Common myeloid progenitor, CD34-positive (primary cell): ENCODE measurements at regions of chr9 and their contacts with region 1.

Region 1: GRCh38 chr9:2857564-2858198 is 13.8 kb upstream of the PUM3 start:
- DNase-seq: peak; percentile 78 to 91 (median 86)
- H3K4me3 ChIP-seq: no peak overlapping the region
- H3K27ac ChIP-seq: no peak overlapping the region
- H3K4me1 ChIP-seq: no peaks in the 10 kb centered on the region
- H3K27me3 ChIP-seq: peaks cover 0 to 11% (median 0%) of the 10 kb centered on the region in 5 experiments

Region 2: DNA sequence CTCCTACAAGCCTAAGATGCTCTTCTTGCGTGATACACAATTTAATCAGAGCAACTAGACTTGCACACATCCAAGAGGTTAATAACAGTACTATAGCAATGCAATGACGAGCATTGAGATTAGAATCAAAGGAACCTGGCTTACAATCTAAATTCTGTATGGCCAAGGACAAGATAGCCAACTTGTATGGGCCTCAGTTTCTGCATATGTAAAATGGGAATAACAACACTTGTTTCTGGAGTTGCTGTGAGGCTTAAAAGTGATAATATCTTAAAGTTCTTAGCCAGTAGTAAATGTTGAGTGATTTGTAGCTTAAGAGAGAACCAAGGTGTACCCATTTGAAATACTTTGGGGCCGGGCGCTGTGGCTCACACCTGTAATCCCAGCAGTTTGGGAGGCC is 11.6 kb before region 1 on chr9:
- CTCF ChIA-PET with region 1: interaction called, 20 read pairs
- POLR2A ChIA-PET with region 1: no interaction called
- DNase-seq: no peak
- H3K4me3 ChIP-seq: no peak overlapping the region
- H3K27ac ChIP-seq: no peak overlapping the region
- H3K4me1 ChIP-seq: peaks cover 15 to 34% (median 23%) of the 10 kb centered on the region in 4 experiments
- H3K27me3 ChIP-seq: no peaks in the 10 kb centered on the region

Region 3: GRCh38 chr9:2872257-2872935 is 14.7 kb after region 1 on chr9:
- CTCF ChIA-PET with region 1: interaction called, 19 read pairs
- POLR2A ChIA-PET with region 1: no interaction called
- DNase-seq: peak; percentile 54 to 78 (median 75)
- H3K4me3 ChIP-seq: no peak overlapping the region
- H3K27ac ChIP-seq: no peak overlapping the region
- H3K4me1 ChIP-seq: no peaks in the 10 kb centered on the region
- H3K27me3 ChIP-seq: peaks cover 0 to 5% (median 0%) of the 10 kb centered on the region in 5 experiments

Region 4: DNA sequence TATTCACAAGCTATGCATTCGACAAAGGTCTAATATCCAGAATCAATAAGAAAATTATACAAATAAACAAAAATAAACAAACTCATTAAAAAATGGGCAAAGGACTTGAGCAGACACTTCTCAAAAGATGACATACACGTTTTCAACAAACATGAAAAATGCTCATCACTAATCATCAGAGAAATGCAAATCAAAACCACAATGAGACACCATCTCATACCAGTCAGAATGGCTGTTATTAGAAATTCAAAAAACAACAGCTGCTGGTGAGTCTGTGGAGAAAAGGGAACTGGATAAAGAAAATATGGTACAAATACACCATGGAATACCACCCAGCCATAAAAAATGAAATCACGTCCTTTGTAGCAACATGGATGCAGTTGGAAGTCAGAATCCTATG is 31.3 kb after region 1 on chr9:
- CTCF ChIA-PET with region 1: no interaction called
- POLR2A ChIA-PET with region 1: no interaction called
- DNase-seq: no peak
- H3K4me3 ChIP-seq: no peak overlapping the region
- H3K27ac ChIP-seq: no peak overlapping the region
- H3K4me1 ChIP-seq: no peaks in the 10 kb centered on the region
- H3K27me3 ChIP-seq: peaks cover 0 to 3% (median 0%) of the 10 kb centered on the region in 5 experiments

Region 5: GRCh38 chr9:3181049-3181953 is 323.6 kb after region 1 on chr9:
- CTCF ChIA-PET with region 1: interaction called, 74 read pairs
- POLR2A ChIA-PET with region 1: no interaction called
- DNase-seq: peak; percentile 83 to 91 (median 90)
- H3K4me3 ChIP-seq: peak overlapping the region; percentile 34 to 81 (median 65)
- H3K27ac ChIP-seq: no peak overlapping the region
- H3K4me1 ChIP-seq: peaks cover under 1 to 32% (median 22%) of the 10 kb centered on the region in 4 experiments
- H3K27me3 ChIP-seq: peaks cover 0 to 24% (median 13%) of the 10 kb centered on the region in 5 experiments

Region 6: DNA sequence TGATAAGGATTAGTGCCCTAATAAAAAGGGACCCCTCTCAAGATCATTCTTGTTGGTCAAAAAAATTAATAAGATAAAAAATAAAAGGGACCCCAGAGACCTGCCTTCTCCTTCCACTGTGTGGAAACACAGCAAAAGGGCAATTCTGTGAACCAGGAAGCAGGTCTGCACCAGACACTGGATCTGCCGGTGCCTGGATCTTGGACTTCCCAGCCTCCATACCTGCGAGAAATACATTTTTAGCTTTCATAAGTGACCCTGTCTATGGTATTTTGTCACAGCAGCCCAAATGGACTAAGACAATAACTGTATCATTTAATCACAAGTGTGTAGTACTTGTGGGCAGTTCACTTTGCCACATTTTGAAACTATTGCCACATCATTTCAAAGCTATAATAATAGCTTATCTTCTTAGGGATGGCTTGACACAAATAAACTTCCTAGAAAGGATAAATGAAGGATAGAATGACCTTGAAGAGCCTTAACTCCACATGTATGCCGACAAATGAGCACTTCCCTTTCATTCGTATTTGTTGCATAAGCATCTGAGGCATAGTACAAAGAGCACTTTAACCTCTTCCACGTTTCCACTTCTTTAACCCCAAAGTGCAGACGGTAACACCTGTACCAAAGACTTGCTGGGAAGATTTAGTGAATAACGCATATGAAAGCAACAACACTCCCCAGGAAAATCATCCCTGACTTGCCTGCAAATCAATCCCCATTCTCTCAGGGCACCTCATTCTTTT is 331.6 kb after region 1 on chr9:
- CTCF ChIA-PET with region 1: interaction called, 74 read pairs
- POLR2A ChIA-PET with region 1: no interaction called
- DNase-seq: no peak
- H3K4me3 ChIP-seq: no peak overlapping the region
- H3K27ac ChIP-seq: no peak overlapping the region
- H3K4me1 ChIP-seq: no peaks in the 10 kb centered on the region
- H3K27me3 ChIP-seq: peaks cover 0 to 3% (median 0%) of the 10 kb centered on the region in 5 experiments